Heart right ventricle (tissue), 16 donors: ENCODE measurements at regions of chr11 and their contacts with region 1.

Region 1: DNA sequence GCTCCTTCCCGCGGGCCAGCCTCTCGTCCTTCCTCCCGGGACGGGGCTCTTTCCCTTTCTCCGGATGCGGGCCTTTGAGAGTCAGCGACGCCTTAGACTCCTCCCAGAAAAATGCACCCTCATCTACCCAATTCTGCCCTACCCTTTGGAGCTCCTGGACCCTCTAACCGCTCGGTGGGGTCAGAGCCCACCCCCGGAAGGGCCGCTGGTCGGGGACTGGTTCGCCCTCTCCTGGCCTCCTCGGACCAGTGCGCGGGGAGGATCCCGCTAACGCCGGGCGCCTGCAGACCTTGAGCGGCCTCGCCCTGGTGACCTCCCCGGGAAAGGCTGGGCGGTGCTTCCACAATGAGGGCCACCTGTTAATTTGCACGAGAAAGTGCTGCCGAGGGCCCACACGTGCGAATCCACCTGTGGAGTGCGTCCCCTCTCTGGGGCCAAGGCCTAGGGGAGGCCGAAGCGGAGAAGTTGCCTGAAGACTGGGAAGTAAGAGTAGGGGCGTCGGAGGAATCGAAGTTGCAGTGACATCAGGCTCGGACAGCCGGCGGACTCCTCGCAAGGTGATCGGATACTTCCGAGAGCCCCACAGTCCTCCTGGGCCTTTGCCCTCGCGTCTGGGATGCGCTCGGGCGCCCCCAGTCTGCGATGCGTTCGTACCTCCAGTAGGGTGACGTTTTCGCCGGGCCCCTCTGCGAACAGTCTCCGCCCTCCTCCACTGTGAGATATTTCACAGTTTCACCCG is 61.5 kb downstream of the ENDOD1 start:
- DNase-seq: peak; percentile 88 to 93
- ATAC-seq: peak; percentile 90 to 95 (median 93)
- H3K4me3 ChIP-seq: peak overlapping the region; percentile 32 to 77 (median 63)
- H3K27ac ChIP-seq: peak overlapping the region; percentile 80 to 97 (median 94)
- H3K4me1 ChIP-seq: peaks cover 0 to 53% (median 15%) of the 10 kb centered on the region in 9 donors
- H3K27me3 ChIP-seq: no peaks in the 10 kb centered on the region
- CTCF ChIP-seq: peak; percentile 68 to 90 (median 77)

Region 2: DNA sequence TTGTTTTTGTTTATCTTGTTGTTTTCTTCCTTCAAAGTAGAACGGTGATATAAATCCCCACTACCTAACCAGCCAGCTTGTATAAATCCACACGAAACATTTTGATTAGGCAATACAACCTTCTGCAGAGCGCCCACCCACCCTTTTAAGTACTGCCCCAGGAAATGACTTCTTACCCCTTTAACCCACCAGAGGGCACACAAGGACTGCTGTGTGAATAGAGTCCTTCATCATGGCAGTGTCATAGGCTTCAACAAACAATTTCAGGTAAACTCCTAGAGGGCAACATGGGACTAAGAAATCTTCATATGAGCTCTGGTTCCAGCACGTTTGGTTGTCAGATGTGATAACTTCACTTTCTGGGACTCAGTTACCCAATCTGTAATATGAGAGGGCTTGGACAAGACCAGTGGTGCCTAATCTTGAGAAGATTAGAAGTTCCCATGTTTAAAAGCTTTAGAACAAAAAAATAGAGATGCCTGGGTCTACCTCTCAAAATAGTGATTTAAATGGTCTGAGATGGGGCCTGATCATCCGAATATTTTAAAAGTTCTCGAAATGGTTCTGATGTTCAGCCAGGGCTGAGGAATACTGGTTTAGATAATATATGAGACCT is 527.9 kb before region 1 on chr11:
- intact Hi-C with region 1: loop called in 3 of 10 experiments (anchors 10 kb)
- DNase-seq: peak in 1 of 2 donors; percentile 77
- ATAC-seq: peak; percentile 84 to 96 (median 94)
- H3K4me3 ChIP-seq: no peak overlapping the region
- H3K27ac ChIP-seq: no peak overlapping the region
- H3K4me1 ChIP-seq: peaks cover 0 to 6% (median 0%) of the 10 kb centered on the region in 9 donors
- H3K27me3 ChIP-seq: no peaks in the 10 kb centered on the region
- CTCF ChIP-seq: peak; percentile 74 to 95 (median 87)

Region 3: DNA sequence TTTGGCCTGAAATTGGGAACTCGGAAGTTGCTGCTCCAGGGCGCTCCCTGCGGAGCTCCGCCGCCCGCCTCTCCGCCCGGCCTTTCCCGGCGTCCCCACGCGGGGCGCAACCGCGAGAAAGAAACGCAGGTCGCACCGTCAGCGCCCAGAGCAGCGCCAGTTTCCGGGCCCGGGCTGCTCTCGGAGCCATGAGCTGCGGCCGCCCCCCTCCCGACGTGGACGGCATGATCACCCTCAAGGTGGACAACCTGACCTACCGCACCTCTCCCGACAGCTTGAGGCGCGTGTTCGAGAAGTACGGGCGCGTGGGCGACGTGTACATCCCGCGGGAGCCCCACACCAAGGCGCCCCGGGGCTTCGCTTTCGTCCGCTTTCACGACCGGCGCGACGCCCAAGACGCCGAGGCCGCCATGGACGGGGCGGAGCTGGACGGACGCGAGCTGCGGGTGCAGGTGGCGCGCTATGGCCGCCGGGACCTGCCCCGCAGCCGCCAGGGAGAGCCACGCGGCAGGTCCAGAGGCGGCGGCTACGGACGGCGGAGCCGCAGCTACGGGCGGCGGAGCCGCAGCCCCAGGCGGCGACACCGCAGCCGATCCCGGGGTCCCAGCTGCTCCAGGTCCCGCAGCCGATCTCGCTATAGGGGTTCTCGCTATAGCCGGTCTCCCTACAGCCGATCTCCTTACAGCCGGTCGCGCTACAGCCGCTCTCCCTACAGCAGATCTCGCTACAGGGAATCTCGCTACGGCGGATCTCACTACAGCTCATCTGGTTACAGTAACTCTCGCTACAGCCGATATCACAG is 83.9 kb before region 1 on chr11:
- intact Hi-C with region 1: loop called in 9 of 10 experiments (anchors 1 to 5 kb)
- DNase-seq: peak; percentile 83 to 88
- ATAC-seq: peak; percentile 87 to 95 (median 90)
- H3K4me3 ChIP-seq: peak overlapping the region; percentile 72 to 89 (median 82)
- H3K27ac ChIP-seq: peak overlapping the region; percentile 94 to 99 (median 97)
- H3K4me1 ChIP-seq: peaks cover 0 to 27% (median 20%) of the 10 kb centered on the region in 9 donors
- H3K27me3 ChIP-seq: no peaks in the 10 kb centered on the region
- CTCF ChIP-seq: peak; percentile 50 to 77 (median 61)

Region 4: DNA sequence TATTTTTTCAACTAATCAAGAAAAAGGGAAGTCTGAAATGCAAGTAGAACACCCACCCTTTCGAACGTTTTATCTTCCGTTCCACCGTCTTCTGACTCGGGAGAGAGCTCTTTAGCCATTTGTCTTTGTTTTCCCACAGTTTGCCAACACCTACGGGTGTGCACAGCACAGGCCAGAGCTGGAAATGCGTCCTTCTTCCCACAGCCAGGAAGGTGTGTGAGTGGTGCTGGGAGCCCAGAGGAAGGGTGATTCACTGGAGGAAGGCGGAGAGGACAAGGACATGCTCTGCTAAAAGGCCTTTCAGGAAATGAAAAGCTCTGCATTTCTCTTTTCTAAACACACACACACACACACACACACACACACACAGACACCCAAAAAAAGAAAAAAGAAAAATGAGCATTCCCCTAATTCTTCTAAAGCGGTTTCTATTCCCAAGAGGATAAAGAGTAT is 42.9 kb before region 1 on chr11:
- intact Hi-C with region 1: loop called in 6 of 10 experiments (anchors 2 to 5 kb)
- DNase-seq: peak; percentile 23 to 66
- ATAC-seq: peak; percentile 65 to 96 (median 92)
- H3K4me3 ChIP-seq: peak overlapping the region in 3 of 10 donors; percentile 11 to 17 (median 15)
- H3K27ac ChIP-seq: peak overlapping the region; percentile 43 to 86 (median 80)
- H3K4me1 ChIP-seq: peaks cover 0 to 51% (median 28%) of the 10 kb centered on the region in 9 donors
- H3K27me3 ChIP-seq: no peaks in the 10 kb centered on the region
- CTCF ChIP-seq: no peak

Region 5: GRCh38 chr11:95318498-95318897 is 167.4 kb after region 1 on chr11:
- intact Hi-C with region 1: no loop called
- DNase-seq: no peak
- ATAC-seq: peak in 3 of 8 donors; percentile 33 to 63 (median 55)
- H3K4me3 ChIP-seq: no peak overlapping the region
- H3K27ac ChIP-seq: no peak overlapping the region
- H3K4me1 ChIP-seq: peaks cover 0 to 25% (median 13%) of the 10 kb centered on the region in 9 donors
- H3K27me3 ChIP-seq: no peaks in the 10 kb centered on the region
- CTCF ChIP-seq: no peak

Region 6: GRCh38 chr11:95705485-95706124 is 554.5 kb after region 1 on chr11:
- intact Hi-C with region 1: loop called (anchors 1 to 5 kb)
- DNase-seq: peak; percentile 78 to 91
- ATAC-seq: peak; percentile 94 to 99 (median 98)
- H3K4me3 ChIP-seq: no peak overlapping the region
- H3K27ac ChIP-seq: peak overlapping the region in 8 of 10 donors; percentile 20 to 56 (median 34)
- H3K4me1 ChIP-seq: peaks cover 0 to 37% (median 10%) of the 10 kb centered on the region in 9 donors
- H3K27me3 ChIP-seq: no peaks in the 10 kb centered on the region
- CTCF ChIP-seq: peak; percentile 90 to 99 (median 96)

Region 7: GRCh38 chr11:96424693-96425092 is 1273.6 kb after region 1 on chr11:
- intact Hi-C with region 1: loop called in 1 of 10 experiments (anchors 10 kb)
- DNase-seq: no peak
- ATAC-seq: no peak
- H3K4me3 ChIP-seq: no peak overlapping the region
- H3K27ac ChIP-seq: no peak overlapping the region
- H3K4me1 ChIP-seq: no peaks in the 10 kb centered on the region
- H3K27me3 ChIP-seq: peaks cover 0 to 72% (median 12%) of the 10 kb centered on the region in 7 donors
- CTCF ChIP-seq: no peak